CD4-positive, alpha-beta memory T cell (primary cell): ENCODE measurements at regions of chr17 and their contacts with region 1.

Region 1: DNA sequence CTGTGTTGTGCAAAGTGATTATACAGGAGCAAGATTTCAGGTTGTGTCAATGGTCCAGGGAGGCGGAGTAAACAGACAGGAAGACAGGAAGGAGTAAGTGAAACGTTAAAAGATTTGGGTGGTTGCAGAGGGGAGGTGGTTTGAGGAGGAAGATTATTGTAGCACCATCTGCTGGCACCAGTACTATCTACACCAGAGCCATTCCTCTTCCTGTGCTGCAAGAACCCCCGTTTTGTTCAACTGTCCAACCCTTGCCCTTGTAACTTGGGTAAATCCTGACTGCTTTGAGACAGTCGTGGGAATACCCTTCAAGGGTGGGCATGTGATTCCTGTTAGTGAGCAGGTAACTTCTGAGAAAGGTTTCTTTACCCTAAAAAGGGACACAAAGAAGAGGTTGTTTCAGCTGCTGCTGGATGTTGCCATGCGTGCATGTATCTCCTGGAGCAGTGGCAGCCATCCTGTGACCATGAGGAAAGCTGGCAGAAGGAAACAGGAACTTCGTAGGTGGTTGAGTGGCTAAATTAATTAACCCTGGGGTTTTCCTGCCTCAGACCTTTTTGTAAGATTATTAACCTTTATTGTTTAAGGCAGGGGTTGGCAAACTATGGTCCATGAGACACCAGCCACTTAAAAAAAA is 124.1 kb downstream of the PRKCA start:
- DNase-seq: peak; percentile 59 to 68 (median 62)
- H3K4me3 ChIP-seq: no peak overlapping the region
- H3K4me3 Mint-ChIP-seq: peak overlapping the region; percentile 45 to 86 (median 64)
- H3K27ac ChIP-seq: no peak overlapping the region
- H3K27ac Mint-ChIP-seq: peak overlapping the region; percentile 45 to 91 (median 87)
- H3K4me1 ChIP-seq: peaks cover 17% of the 10 kb centered on the region
- H3K4me1 Mint-ChIP-seq: peaks cover 38 to 83% (median 60%) of the 10 kb centered on the region in 4 donors
- H3K27me3 ChIP-seq: no peaks in the 10 kb centered on the region
- H3K27me3 Mint-ChIP-seq: no peaks in the 10 kb centered on the region

Region 2: DNA sequence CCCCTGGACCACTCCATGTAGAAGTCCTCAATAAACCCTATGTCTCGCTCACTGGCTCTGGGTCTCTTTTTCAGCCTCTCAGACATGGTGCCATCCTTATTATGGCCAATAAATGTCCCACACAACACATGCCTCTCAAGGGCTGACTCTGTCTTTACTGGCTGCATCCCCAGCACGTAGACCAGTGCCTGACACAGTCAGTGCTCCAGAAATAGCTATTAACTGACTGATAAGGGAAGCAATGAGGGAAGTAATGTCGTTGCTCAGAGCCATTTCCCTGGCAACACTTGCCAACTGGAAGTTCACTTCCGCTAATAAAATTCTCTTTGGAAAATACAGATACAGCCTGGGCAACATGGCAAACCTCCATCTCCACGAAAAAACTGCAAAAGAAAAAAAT is 178.2 kb before region 1 on chr17:
- CTCF ChIA-PET with region 1: interaction called, 4 read pairs
- POLR2A ChIA-PET with region 1: interaction called, 3 read pairs
- intact Hi-C with region 1: loop called (anchors 2 kb)
- DNase-seq: no peak
- H3K4me3 ChIP-seq: no peak overlapping the region
- H3K4me3 Mint-ChIP-seq: no peak overlapping the region
- H3K27ac ChIP-seq: no peak overlapping the region
- H3K27ac Mint-ChIP-seq: no peak overlapping the region
- H3K4me1 ChIP-seq: peaks cover 40% of the 10 kb centered on the region
- H3K4me1 Mint-ChIP-seq: peaks cover 18 to 48% (median 31%) of the 10 kb centered on the region in 4 donors
- H3K27me3 ChIP-seq: no peaks in the 10 kb centered on the region
- H3K27me3 Mint-ChIP-seq: no peaks in the 10 kb centered on the region

Region 3: DNA sequence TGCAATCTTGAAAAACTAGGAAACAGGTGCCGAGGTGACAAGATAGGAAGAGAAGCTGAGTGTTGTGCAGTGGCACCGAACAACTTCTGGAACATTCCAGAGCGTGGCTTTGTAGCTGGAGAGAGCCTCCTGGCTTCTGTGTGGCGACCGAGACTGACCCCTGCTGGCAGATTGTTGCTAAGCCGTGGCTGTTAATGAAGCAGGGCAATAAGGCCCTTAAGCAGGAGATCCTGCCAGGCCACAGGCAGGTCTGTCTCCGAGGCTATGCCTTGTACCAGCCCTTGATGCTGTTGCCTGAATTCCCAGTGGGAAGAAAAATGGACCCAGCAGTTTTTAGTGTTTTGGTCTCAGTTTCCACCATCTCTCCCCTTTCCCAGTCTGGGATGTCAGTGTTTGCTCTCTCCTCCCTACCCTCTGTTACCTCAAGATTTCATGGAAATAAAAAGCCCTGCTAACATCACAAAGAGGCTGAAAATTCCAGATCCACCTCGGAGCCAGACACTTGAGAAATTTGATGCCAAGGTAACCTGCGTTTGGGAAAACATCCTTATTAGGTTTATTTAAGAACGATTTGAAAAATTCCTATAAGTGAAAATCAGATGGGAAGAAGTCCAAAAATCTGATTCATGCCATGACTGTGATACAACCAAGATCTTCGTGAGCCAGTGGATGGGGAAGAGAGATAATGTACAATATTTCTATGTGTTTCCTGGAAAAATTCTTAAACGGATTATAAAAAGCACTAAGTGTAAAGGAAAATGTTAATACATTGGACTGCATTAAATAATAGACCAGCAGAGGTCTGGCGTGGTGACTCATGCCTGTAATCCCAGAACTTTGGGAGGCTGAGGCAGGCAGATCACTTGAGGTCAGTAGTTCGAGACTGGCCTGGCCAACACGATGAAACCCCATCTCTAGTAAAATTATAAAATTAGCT is 141.0 kb after region 1 on chr17:
- CTCF ChIA-PET with region 1: interaction called, 7 read pairs
- POLR2A ChIA-PET with region 1: no interaction called
- intact Hi-C with region 1: loop called (anchors 1 kb)
- DNase-seq: peak; percentile 60 to 77 (median 62)
- H3K4me3 ChIP-seq: no peak overlapping the region
- H3K4me3 Mint-ChIP-seq: peak overlapping the region in 1 of 8 donors; percentile 21
- H3K27ac ChIP-seq: no peak overlapping the region
- H3K27ac Mint-ChIP-seq: peak overlapping the region in 3 of 7 donors; percentile 8 to 68 (median 9)
- H3K4me1 ChIP-seq: peaks cover 8% of the 10 kb centered on the region
- H3K4me1 Mint-ChIP-seq: peaks cover 21 to 32% (median 26%) of the 10 kb centered on the region in 4 donors
- H3K27me3 ChIP-seq: no peaks in the 10 kb centered on the region
- H3K27me3 Mint-ChIP-seq: no peaks in the 10 kb centered on the region

Region 4: GRCh38 chr17:66673668-66674315 is 247.3 kb after region 1 on chr17:
- CTCF ChIA-PET with region 1: no interaction called
- POLR2A ChIA-PET with region 1: no interaction called
- intact Hi-C with region 1: loop called (anchors 10 kb)
- DNase-seq: peak; percentile 75 to 88 (median 84)
- H3K4me3 ChIP-seq: peak overlapping the region in 1 of 2 donors; percentile 21
- H3K4me3 Mint-ChIP-seq: peak overlapping the region; percentile 42 to 88 (median 74)
- H3K27ac ChIP-seq: peak overlapping the region; percentile 64
- H3K27ac Mint-ChIP-seq: peak overlapping the region; percentile 88 to 97 (median 96)
- H3K4me1 ChIP-seq: peaks cover 43% of the 10 kb centered on the region
- H3K4me1 Mint-ChIP-seq: peaks cover 43 to 79% (median 57%) of the 10 kb centered on the region in 4 donors
- H3K27me3 ChIP-seq: no peaks in the 10 kb centered on the region
- H3K27me3 Mint-ChIP-seq: no peaks in the 10 kb centered on the region

Region 5: DNA sequence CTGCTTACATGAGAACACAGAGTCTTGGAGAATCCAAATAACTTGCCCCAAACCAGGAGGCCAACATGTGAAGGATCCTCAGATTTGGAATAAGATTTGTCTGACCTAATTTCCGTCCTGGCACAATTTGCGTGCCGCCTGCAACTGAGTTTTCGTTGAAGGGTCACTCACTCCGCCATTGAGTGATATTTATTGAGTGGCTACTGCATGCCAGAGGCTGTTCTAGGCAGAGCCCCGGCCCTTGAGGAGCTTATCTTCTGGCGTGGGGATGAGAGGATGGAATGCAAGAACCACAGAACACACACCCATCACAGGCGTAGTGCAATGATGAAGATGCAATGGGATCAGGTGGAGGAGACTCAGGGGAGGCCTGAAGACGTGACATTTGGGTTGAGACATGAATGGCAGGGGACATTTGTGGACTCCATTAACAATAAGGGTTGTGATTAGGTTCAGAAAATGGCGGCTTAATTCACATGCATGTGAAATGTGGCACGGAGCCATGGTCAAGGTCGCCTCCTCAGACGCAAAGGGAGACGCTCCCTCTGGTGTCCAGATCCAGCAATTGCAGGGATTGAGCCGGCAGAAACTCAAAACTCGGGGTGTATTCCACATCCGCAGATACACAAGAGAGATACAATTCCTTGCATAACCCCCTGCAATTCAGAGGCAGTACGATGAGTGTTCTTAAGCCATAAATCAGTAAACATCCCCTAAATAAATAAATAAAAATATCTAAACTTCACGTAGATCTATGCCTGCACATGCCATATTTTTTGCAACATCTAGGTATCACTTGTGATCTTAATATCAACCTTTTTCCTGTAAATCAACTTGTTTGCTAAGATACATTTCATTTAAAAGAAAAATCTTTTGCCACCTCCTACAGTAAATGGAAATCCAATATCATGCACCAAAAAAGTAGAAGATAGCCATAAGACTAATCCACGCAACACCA is 480.1 kb after region 1 on chr17:
- CTCF ChIA-PET with region 1: no interaction called
- POLR2A ChIA-PET with region 1: no interaction called
- intact Hi-C with region 1: loop called (anchors 5 kb)
- DNase-seq: peak; percentile 42 to 60 (median 58)
- H3K4me3 ChIP-seq: no peak overlapping the region
- H3K4me3 Mint-ChIP-seq: no peak overlapping the region
- H3K27ac ChIP-seq: no peak overlapping the region
- H3K27ac Mint-ChIP-seq: peak overlapping the region in 1 of 7 donors; percentile 12
- H3K4me1 ChIP-seq: no peaks in the 10 kb centered on the region
- H3K4me1 Mint-ChIP-seq: peaks cover 4 to 6% (median 5%) of the 10 kb centered on the region in 4 donors
- H3K27me3 ChIP-seq: no peaks in the 10 kb centered on the region
- H3K27me3 Mint-ChIP-seq: peaks cover 2 to 9% of the 10 kb centered on the region in 2 donors